A673 (cell line): ENCODE measurements at regions of chrX and their contacts with region 1.

Region 1: GRCh38 chrX:104310657-104311254 is 56.0 kb upstream of the ESX1 start:
- DNase-seq: no peak
- H3K4me3 ChIP-seq: no peak overlapping the region
- H3K27ac ChIP-seq: no peak overlapping the region
- H3K4me1 ChIP-seq: no peaks in the 10 kb centered on the region
- H3K27me3 ChIP-seq: no peaks in the 10 kb centered on the region
- CTCF ChIP-seq: no peak

Region 2: GRCh38 chrX:104400387-104400786 is 89.6 kb after region 1 on chrX:
- CTCF ChIA-PET with region 1: no interaction called
- POLR2A ChIA-PET with region 1: no interaction called
- intact Hi-C with region 1: no loop called
- DNase-seq: no peak
- H3K4me3 ChIP-seq: no peak overlapping the region
- H3K27ac ChIP-seq: no peak overlapping the region
- H3K4me1 ChIP-seq: no peaks in the 10 kb centered on the region
- H3K27me3 ChIP-seq: peaks cover 1% of the 10 kb centered on the region
- CTCF ChIP-seq: no peak

Region 3: GRCh38 chrX:104665691-104666090 is 354.9 kb after region 1 on chrX:
- CTCF ChIA-PET with region 1: no interaction called
- POLR2A ChIA-PET with region 1: interaction called, 10 read pairs
- intact Hi-C with region 1: no loop called
- DNase-seq: no peak
- H3K4me3 ChIP-seq: no peak overlapping the region
- H3K27ac ChIP-seq: no peak overlapping the region
- H3K4me1 ChIP-seq: no peaks in the 10 kb centered on the region
- H3K27me3 ChIP-seq: no peaks in the 10 kb centered on the region
- CTCF ChIP-seq: no peak

Region 4: GRCh38 chrX:105618393-105619101 is 1307.8 kb after region 1 on chrX:
- CTCF ChIA-PET with region 1: no interaction called
- POLR2A ChIA-PET with region 1: no interaction called
- intact Hi-C with region 1: no loop called
- DNase-seq: no peak
- H3K4me3 ChIP-seq: no peak overlapping the region
- H3K27ac ChIP-seq: no peak overlapping the region
- H3K4me1 ChIP-seq: no peaks in the 10 kb centered on the region
- H3K27me3 ChIP-seq: no peaks in the 10 kb centered on the region
- CTCF ChIP-seq: no peak